Right cardiac atrium (tissue), 5 donors: ENCODE measurements at regions of chr3 and their contacts with region 1.

Region 1: GRCh38 chr3:44198284-44199269 is 43.1 kb upstream of the TOPAZ1 start:
- DNase-seq: peak; percentile 47 to 62 (median 55)
- ATAC-seq: peak; percentile 80
- H3K4me3 ChIP-seq: no peak overlapping the region
- H3K27ac ChIP-seq: no peak overlapping the region
- H3K4me1 ChIP-seq: no peaks in the 10 kb centered on the region
- H3K27me3 ChIP-seq: no peaks in the 10 kb centered on the region

Region 2: DNA sequence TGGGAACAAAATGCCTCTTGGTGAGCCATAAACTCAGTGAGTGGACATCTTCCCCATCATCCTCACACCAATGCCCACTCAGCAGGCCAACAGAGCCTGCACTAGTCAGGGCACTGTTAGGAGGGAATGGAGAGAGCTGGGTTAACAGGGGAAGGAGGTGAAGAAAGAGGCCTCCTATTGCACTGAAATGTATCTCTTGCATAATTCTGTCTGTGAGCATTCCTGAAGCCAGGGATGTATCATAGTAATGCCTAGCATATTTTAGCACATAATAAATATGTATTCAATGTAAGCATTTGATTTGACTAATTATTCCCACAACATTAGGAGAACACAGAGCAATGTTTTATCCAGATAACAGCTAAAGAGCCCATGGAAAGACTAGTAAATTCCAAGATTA is 658.0 kb before region 1 on chr3:
- intact Hi-C with region 1: loop called in 3 of 4 experiments (anchors 5 kb)
- DNase-seq: no peak
- ATAC-seq: no peak
- H3K4me3 ChIP-seq: no peak overlapping the region
- H3K27ac ChIP-seq: no peak overlapping the region
- H3K4me1 ChIP-seq: no peaks in the 10 kb centered on the region
- H3K27me3 ChIP-seq: no peaks in the 10 kb centered on the region

Region 3: GRCh38 chr3:43549626-43550290 is 648.8 kb before region 1 on chr3:
- intact Hi-C with region 1: loop called in 3 of 4 experiments (anchors 5 kb)
- DNase-seq: no peak
- ATAC-seq: no peak
- H3K4me3 ChIP-seq: no peak overlapping the region
- H3K27ac ChIP-seq: no peak overlapping the region
- H3K4me1 ChIP-seq: no peaks in the 10 kb centered on the region
- H3K27me3 ChIP-seq: no peaks in the 10 kb centered on the region

Region 4: DNA sequence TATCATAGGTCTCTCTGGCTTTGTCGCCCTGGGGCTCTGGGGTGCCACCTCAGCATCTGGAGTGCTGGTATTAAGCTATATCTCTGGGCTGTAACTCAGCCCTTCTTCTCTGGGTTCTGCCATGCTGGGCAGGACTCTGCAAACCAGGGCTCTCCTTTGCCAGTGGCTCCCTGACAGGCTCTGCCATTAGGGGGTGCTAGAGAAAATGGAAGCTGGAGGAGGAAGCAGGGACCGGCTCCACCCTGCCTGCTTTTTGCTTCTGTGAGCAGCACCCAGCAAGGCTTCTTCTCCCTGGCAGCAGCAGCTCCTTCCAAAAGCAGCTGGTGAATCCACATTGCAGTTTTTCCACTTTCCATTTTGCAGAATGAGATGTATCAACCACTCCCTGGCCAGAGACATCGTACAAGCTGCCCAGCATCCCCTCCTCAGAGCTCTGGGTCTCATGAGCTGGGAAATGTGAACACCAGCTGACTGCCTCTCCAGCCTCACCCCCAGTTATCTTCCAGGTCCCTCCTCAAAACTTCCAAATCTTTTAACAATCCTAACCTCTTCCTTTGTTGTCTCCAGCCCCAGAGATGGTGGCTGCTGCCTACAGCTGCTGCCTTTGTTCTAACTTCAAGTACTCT is 342.8 kb before region 1 on chr3:
- intact Hi-C with region 1: loop called in 2 of 4 experiments (anchors 5 kb)
- DNase-seq: peak; percentile 57 to 79 (median 78)
- ATAC-seq: peak; percentile 85 to 91
- H3K4me3 ChIP-seq: no peak overlapping the region
- H3K27ac ChIP-seq: no peak overlapping the region
- H3K4me1 ChIP-seq: no peaks in the 10 kb centered on the region
- H3K27me3 ChIP-seq: no peaks in the 10 kb centered on the region